Activated CD8-positive, alpha-beta memory T cell treated with anti-CD3 and anti-CD28 coated beads, Interleukin-2, amount 10 ng/mL, durations not matched to agents 7 days and 5 days (primary cell): ENCODE measurements at regions of chr12 and their contacts with region 1.

Region 1: GRCh38 chr12:52023182-52023975 is 16.6 kb downstream of the TAMALIN start:
- DNase-seq: peak; percentile 94
- ATAC-seq: peak; percentile 60
- H3K4me3 Mint-ChIP-seq: peak overlapping the region; percentile 80
- H3K27ac Mint-ChIP-seq: peak overlapping the region; percentile 98
- H3K4me1 Mint-ChIP-seq: peaks cover 42% of the 10 kb centered on the region
- H3K27me3 Mint-ChIP-seq: peaks cover 4% of the 10 kb centered on the region

Region 2: GRCh38 chr12:51726931-51727330 is 296.4 kb before region 1 on chr12:
- CTCF ChIA-PET with region 1: no interaction called
- DNase-seq: no peak
- ATAC-seq: no peak
- H3K4me3 Mint-ChIP-seq: no peak overlapping the region
- H3K27ac Mint-ChIP-seq: no peak overlapping the region
- H3K4me1 Mint-ChIP-seq: no peaks in the 10 kb centered on the region
- H3K27me3 Mint-ChIP-seq: peaks cover 41% of the 10 kb centered on the region

Region 3: DNA sequence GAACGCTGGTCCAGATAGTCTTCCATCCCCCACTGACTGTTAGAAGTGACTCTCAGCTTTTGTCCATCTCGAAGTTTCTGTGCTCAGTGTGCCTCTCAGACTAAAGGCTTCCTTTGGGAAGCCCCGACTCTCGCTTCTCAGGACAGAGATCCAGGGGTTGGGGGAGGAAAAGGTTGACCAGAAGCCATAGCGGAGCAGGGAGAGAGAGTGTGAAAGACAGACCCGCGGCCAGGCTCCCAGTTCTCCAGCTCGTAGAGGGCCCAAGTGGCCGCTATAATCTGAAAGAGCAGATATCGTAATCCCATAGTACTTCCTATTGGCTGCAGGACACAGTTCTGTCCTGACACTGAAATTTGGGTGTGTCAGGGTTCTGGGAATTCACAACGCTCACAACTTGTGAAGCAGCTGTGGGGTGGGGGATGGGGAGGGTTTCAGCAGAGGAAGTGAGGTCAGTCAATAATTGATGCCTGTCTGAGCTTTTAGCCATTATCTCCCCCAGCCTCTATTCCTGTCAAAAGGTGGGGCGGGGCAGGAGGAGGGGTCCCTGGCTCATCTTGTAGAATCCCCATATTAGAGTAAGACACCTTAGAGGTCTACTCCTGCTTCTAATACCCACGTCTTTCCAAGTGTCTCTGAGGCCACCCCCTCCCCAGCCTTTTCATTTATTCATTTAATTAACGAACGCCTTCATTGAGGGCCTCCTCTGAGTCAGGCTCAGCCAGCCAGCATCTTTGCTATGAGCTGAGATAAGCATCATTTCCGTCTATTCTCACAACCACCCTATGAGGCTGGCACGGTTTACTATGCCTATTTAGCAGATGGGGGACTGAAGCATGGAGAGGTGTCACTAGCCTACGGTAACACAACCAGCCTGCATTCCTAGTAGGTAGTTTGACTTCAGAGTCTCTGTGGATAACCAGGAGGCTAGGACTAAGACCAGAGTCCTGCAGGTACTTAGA is 117.6 kb before region 1 on chr12:
- CTCF ChIA-PET with region 1: no interaction called
- DNase-seq: no peak
- ATAC-seq: no peak
- H3K4me3 Mint-ChIP-seq: no peak overlapping the region
- H3K27ac Mint-ChIP-seq: no peak overlapping the region
- H3K4me1 Mint-ChIP-seq: no peaks in the 10 kb centered on the region
- H3K27me3 Mint-ChIP-seq: peaks cover 32% of the 10 kb centered on the region

Region 4: GRCh38 chr12:51970904-51971646 is 52.3 kb before region 1 on chr12:
- CTCF ChIA-PET with region 1: interaction called, 116 read pairs
- DNase-seq: peak; percentile 84
- ATAC-seq: peak; percentile 88
- H3K4me3 Mint-ChIP-seq: peak overlapping the region; percentile 43
- H3K27ac Mint-ChIP-seq: peak overlapping the region; percentile 76
- H3K4me1 Mint-ChIP-seq: peaks cover 61% of the 10 kb centered on the region
- H3K27me3 Mint-ChIP-seq: peaks cover 55% of the 10 kb centered on the region

Region 5: GRCh38 chr12:51994959-51995358 is 28.4 kb before region 1 on chr12:
- CTCF ChIA-PET with region 1: interaction called, 400 read pairs
- DNase-seq: no peak
- ATAC-seq: no peak
- H3K4me3 Mint-ChIP-seq: no peak overlapping the region
- H3K27ac Mint-ChIP-seq: no peak overlapping the region
- H3K4me1 Mint-ChIP-seq: peaks cover 4% of the 10 kb centered on the region
- H3K27me3 Mint-ChIP-seq: no peaks in the 10 kb centered on the region

Region 6: DNA sequence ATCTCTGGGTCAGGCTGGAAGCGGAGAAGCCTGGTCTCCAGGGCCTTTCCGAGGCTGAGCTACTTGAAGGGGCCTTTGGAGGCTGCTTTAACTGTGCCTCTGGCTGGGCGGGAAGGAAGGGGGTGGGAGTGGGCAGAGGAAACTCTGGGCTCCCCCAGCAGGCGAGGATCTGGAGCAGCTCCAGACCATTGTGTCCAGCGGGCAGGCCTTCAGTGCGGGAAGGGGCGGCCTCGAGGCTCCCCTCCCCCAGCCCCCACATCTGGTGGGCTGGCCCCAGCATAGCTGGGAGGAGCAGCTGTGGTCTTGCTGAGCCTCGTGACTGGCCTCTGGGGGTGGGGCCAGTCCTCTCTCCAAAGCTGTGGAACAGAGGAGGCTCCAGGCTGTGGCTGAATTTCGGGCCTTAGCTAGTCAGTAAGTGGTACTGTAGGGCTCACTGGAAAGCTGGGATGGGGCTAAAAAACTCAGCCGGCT is 13.2 kb before region 1 on chr12:
- CTCF ChIA-PET with region 1: interaction called, 197 read pairs
- DNase-seq: no peak
- ATAC-seq: no peak
- H3K4me3 Mint-ChIP-seq: no peak overlapping the region
- H3K27ac Mint-ChIP-seq: no peak overlapping the region
- H3K4me1 Mint-ChIP-seq: peaks cover 9% of the 10 kb centered on the region
- H3K27me3 Mint-ChIP-seq: peaks cover 32% of the 10 kb centered on the region

Region 7: GRCh38 chr12:52050761-52051541 is 27.6 kb after region 1 on chr12 and contains the start of gene NR4A1:
- CTCF ChIA-PET with region 1: interaction called, 80 read pairs
- DNase-seq: peak; percentile 97
- ATAC-seq: peak; percentile 85
- H3K4me3 Mint-ChIP-seq: peak within 1 kb of the TSS; percentile 79
- H3K27ac Mint-ChIP-seq: peak within 1 kb of the TSS; percentile 87
- H3K4me1 Mint-ChIP-seq: peaks cover 41% of the 10 kb centered on the region
- H3K27me3 Mint-ChIP-seq: peaks cover 6% of the 10 kb centered on the region
- total RNA-seq, gene NR4A1: 8.4 to 41.8 TPM

Region 8: GRCh38 chr12:52091869-52092268 is 68.5 kb after region 1 on chr12:
- CTCF ChIA-PET with region 1: interaction called, 410 read pairs
- DNase-seq: no peak
- ATAC-seq: no peak
- H3K4me3 Mint-ChIP-seq: no peak overlapping the region
- H3K27ac Mint-ChIP-seq: no peak overlapping the region
- H3K4me1 Mint-ChIP-seq: no peaks in the 10 kb centered on the region
- H3K27me3 Mint-ChIP-seq: peaks cover 62% of the 10 kb centered on the region

Region 9: DNA sequence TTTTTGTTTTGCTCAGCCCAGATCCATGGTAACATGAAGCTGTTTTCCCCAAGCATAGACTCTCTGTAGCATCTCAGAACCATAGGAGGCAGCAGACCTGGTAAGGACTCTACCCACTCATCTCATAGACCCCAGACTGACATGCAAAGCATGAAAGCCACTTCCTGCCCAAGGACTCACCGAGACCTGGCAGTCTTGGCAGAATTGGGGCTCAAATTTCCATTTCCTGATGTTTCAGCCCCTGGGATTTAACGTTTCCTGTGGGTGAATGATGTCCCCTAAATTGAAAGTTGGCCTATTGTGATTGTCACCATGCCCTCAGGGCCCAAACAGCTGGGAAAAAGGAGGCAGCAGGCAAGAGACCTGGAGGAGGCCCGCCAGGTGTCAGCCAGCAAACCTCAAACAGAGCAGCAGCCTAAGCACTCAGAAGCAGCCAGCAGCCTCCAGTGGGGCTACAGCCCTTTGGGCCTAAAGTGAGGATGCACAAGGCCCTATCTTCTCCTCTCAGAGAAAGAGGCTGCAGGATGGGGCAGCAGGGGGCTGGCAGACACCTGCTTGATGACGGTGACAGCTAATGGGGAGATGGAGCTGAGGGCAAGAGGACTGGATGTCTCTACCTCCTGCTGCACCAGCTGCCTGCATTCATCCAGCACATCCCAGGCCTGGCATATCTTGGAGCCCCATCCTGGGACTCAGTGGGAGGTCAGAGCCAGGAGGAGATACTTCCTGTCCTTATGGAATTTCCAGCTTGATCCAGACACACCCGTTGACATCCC is 335.4 kb after region 1 on chr12:
- CTCF ChIA-PET with region 1: no interaction called
- DNase-seq: peak; percentile 79
- ATAC-seq: peak; percentile 93
- H3K4me3 Mint-ChIP-seq: no peak overlapping the region
- H3K27ac Mint-ChIP-seq: peak overlapping the region; percentile 59
- H3K4me1 Mint-ChIP-seq: peaks cover 37% of the 10 kb centered on the region
- H3K27me3 Mint-ChIP-seq: peaks cover 10% of the 10 kb centered on the region